ENCODE measurements at regions of chr22 and their contacts with region 1.

Region 1: GRCh38 chr22:38051900-38052862 is 5.0 kb upstream of the PICK1 start:
- DNase-seq: peak; percentile 92
- H3K4me3 ChIP-seq: no peak overlapping the region
- H3K27ac ChIP-seq: peak overlapping the region; percentile 60
- H3K4me1 ChIP-seq: peaks cover 45% of the 10 kb centered on the region
- CTCF ChIP-seq: peak; percentile 98

Region 2: DNA sequence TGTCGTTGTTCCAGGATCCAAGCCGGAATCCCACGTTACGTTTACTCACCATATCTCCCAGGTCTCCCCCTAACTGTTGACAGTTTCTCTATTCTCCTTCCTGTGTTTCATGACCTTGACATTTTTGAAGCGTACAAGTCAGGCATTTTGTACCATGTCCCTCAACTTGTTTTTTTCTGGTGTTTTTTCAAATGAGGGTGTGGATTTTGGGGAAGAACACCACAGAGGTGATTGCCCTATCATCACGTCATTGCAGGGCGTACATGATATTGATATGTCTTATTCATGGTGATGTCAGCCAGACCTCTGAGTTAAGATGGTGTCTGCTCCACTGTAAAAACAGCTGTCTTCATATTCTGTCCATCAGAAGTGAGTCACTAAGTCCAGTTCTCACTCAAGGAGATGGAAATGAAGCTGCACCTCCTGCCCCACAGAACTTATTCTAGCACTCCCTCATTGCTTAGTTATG is 39.5 kb before region 1 on chr22:
- CTCF ChIA-PET with region 1: no interaction called
- POLR2A ChIA-PET with region 1: no interaction called
- intact Hi-C with region 1: no loop called
- DNase-seq: no peak
- H3K4me3 ChIP-seq: no peak overlapping the region
- H3K27ac ChIP-seq: no peak overlapping the region
- H3K4me1 ChIP-seq: no peaks in the 10 kb centered on the region
- CTCF ChIP-seq: no peak

Region 3: DNA sequence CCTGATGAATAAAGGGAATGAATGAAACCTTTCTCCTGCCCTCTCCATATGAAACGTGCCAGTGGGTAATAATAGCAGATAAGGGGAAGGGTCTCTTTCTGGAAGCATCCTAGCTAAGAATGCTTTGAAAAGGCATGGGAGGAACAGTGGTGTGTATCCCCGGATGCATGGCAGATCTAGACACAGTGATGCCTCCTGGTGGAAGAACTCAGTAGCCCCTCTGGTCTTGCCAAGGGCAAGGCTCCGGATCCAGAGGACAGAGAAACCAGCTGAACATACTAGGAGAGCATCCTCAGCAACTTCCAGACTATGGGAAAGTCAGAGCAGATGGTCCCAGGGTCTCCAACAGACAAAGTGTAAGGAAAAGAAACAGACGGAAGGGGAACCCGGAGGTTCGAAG is 51.9 kb after region 1 on chr22:
- CTCF ChIA-PET with region 1: interaction called, 6 read pairs
- POLR2A ChIA-PET with region 1: no interaction called
- intact Hi-C with region 1: loop called (anchors 1 kb)
- DNase-seq: peak; percentile 55
- H3K4me3 ChIP-seq: no peak overlapping the region
- H3K27ac ChIP-seq: no peak overlapping the region
- H3K4me1 ChIP-seq: no peaks in the 10 kb centered on the region
- CTCF ChIP-seq: peak; percentile 73

Region 4: GRCh38 chr22:38262051-38262795 is 210.0 kb after region 1 on chr22:
- CTCF ChIA-PET with region 1: no interaction called
- POLR2A ChIA-PET with region 1: no interaction called
- intact Hi-C with region 1: loop called (anchors 2 kb)
- DNase-seq: peak; percentile 64
- H3K4me3 ChIP-seq: no peak overlapping the region
- H3K27ac ChIP-seq: peak overlapping the region; percentile 29
- H3K4me1 ChIP-seq: peaks cover 67% of the 10 kb centered on the region
- CTCF ChIP-seq: peak; percentile 86

Region 5: GRCh38 chr22:38461414-38462081 is 409.4 kb after region 1 on chr22:
- CTCF ChIA-PET with region 1: no interaction called
- POLR2A ChIA-PET with region 1: no interaction called
- intact Hi-C with region 1: loop called (anchors 5 kb)
- DNase-seq: peak; percentile 80
- H3K4me3 ChIP-seq: no peak overlapping the region
- H3K27ac ChIP-seq: no peak overlapping the region
- H3K4me1 ChIP-seq: peaks cover 34% of the 10 kb centered on the region
- CTCF ChIP-seq: no peak

Region 6: GRCh38 chr22:38569972-38570778 is 518.0 kb after region 1 on chr22 and contains the start of gene DMC1:
- CTCF ChIA-PET with region 1: interaction called, 6 read pairs
- POLR2A ChIA-PET with region 1: no interaction called
- intact Hi-C with region 1: loop called (anchors 1 kb)
- DNase-seq: peak; percentile 97
- H3K4me3 ChIP-seq: peak within 1 kb of the TSS; percentile 84
- H3K27ac ChIP-seq: peak within 1 kb of the TSS; percentile 77
- H3K4me1 ChIP-seq: peaks cover 23% of the 10 kb centered on the region
- CTCF ChIP-seq: no peak
- total RNA-seq, gene DMC1: 44.3 and 84.7 TPM in 2 replicates

Measured in OCI-LY7 (cell line).